Gastrocnemius medialis (tissue), 4 donors: ENCODE measurements at regions of chr5 and their contacts with region 1.

Region 1: GRCh38 chr5:36739751-36740221 is 133.4 kb downstream of the SLC1A3 start:
- DNase-seq: peak in 1 of 2 donors; percentile 45
- ATAC-seq: peak in 1 of 2 donors; percentile 63
- H3K4me3 ChIP-seq: no peak overlapping the region
- H3K27ac ChIP-seq: no peak overlapping the region
- H3K4me1 ChIP-seq: peaks cover 8% of the 10 kb centered on the region in 2 donors
- H3K27me3 ChIP-seq: peaks cover 0 to 7% (median 0%) of the 10 kb centered on the region in 3 donors
- CTCF ChIP-seq: peak; percentile 40 to 66 (median 60)
- POLR2A ChIP-seq: no peak

Region 2: GRCh38 chr5:35847961-35848360 is 891.8 kb before region 1 on chr5:
- in situ Hi-C with region 1: no loop called
- intact Hi-C with region 1: no loop called
- DNase-seq: no peak
- ATAC-seq: no peak
- H3K4me3 ChIP-seq: no peak overlapping the region
- H3K27ac ChIP-seq: no peak overlapping the region
- H3K4me1 ChIP-seq: peaks cover 0 to 10% of the 10 kb centered on the region in 2 donors
- H3K27me3 ChIP-seq: peaks cover 0 to 3% (median 0%) of the 10 kb centered on the region in 3 donors
- CTCF ChIP-seq: no peak
- POLR2A ChIP-seq: no peak

Region 3: DNA sequence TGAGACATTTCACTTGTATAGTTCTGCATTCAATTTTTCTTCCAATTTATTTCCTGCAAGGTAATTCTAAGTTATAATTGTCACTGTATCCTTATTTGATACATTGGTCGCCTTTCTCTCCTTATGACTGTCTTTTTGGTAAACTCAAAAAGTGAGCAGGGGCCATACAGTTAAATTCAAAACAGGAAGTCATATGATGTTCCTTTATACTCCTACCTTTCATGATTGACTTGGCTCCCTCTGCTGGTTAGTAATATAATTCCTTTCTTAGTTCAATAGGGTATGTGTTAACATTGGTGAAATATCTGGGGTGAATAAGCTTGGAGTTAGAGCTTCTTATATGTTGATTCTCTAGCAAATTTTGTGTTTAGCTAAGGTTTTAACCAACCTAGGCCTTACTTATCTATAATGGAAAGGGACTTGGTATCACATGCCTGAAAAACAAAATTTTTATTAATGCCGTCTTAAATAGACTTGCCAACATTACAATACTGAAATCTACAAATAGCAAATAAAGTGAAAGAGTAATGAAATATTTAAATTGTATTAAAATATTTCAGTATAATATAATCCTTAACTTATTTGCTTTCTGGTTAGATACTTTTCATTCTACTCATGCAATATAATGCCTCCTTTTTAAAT is 130.7 kb after region 1 on chr5:
- in situ Hi-C with region 1: loop called (anchors 5 to 25 kb)
- intact Hi-C with region 1: loop called (anchors 2 kb)
- DNase-seq: no peak
- ATAC-seq: peak; percentile 77 to 81
- H3K4me3 ChIP-seq: no peak overlapping the region
- H3K27ac ChIP-seq: no peak overlapping the region
- H3K4me1 ChIP-seq: peaks cover 20 to 30% of the 10 kb centered on the region in 2 donors
- H3K27me3 ChIP-seq: no peaks in the 10 kb centered on the region
- CTCF ChIP-seq: peak; percentile 36 to 68 (median 58)
- POLR2A ChIP-seq: no peak

Region 4: DNA sequence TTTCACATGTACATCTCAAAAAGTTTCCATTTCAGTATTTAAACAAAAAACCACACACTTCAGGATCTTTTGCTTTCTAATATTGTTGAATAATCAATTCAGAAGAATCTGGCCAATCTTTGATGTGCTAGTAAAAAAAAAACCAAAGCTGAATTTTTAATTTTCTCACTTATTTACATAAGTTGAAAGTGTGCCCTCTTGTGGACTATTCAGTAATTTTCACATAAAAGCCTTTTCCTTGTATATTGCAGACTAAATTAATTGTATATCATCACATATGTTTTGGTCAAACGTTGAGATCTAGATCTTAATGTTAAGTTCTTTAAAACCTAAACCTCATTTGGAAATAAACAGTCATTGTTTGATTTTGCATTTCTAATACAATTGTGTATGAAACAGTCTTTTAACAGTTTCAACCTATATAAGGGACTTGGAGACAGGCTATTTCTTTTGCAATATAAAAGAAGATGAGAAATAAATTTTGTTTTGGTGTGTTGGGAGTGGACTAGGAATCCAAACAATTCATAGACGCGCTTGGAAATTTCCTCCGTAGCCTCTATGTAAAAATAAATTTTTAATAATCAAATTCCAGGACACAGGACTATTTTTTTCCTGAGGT is 204.9 kb after region 1 on chr5:
- in situ Hi-C with region 1: loop called in 1 of 4 experiments (anchors 10 kb)
- intact Hi-C with region 1: no loop called
- DNase-seq: no peak
- ATAC-seq: no peak
- H3K4me3 ChIP-seq: no peak overlapping the region
- H3K27ac ChIP-seq: no peak overlapping the region
- H3K4me1 ChIP-seq: peaks cover 40 to 44% of the 10 kb centered on the region in 2 donors
- H3K27me3 ChIP-seq: no peaks in the 10 kb centered on the region
- CTCF ChIP-seq: peak in 4 of 5 experiments; percentile 20 to 68 (median 38)
- POLR2A ChIP-seq: no peak

Region 5: DNA sequence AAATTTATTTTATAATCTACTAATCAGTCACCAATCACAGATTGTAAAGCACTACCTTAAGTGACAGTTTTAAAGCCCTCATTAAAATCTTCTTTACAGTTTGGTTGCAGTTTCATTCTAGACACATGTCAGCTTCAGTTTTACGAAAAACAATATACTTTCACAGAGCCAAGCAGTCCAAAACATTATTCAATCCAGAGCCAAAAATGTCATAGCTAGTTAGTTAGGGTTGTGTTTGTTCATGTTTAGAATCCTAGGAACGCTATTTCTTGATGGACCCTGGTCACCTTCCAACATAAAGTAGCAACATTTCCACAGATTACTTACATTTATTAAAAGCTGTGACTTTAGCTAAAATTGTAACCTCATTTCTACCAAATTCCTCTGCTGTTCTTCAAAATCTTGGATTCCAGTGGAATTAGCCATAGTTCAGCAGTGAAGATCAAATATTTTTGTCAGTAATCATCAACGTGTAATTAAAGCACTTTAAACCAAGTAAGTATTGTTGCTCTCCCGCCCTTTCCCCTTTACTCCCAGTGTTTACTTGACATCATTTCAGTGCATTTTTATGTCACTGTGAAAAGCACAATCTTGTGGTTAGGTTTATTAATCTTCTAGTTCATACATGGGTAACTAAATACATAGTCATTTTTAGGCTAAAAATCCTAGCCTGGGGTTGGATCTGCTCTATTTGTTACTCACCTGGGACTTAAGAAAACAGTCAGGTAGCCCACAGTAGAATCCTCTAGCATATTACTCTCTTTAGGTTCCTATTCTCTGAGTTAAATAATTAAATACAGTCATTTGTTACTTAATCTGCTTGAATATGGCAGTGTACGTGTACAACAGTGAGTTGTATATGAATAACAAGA is 211.0 kb after region 1 on chr5:
- in situ Hi-C with region 1: loop called in 1 of 4 experiments (anchors 10 kb)
- intact Hi-C with region 1: loop called (anchors 5 kb)
- DNase-seq: no peak
- ATAC-seq: no peak
- H3K4me3 ChIP-seq: no peak overlapping the region
- H3K27ac ChIP-seq: no peak overlapping the region
- H3K4me1 ChIP-seq: peaks cover 45 to 47% of the 10 kb centered on the region in 2 donors
- H3K27me3 ChIP-seq: no peaks in the 10 kb centered on the region
- CTCF ChIP-seq: no peak
- POLR2A ChIP-seq: no peak

Region 6: DNA sequence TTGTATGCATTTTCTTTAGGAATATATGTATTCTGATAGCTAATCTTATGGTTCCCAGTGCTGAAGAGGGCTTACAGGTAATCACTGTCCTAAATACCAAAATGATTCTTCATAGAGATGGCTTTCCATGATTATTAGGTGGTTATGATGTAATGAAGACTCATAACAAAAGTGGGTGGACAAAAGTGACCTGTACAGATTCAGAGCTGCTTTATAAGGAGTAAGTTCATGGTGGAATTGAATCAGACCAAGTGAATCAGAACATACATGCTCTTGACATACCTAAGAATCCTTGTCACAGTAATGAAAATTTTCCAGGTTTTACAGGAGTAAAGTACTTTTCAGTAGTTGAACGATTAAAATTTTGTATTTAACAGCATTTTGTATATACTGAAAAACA is 242.4 kb after region 1 on chr5:
- in situ Hi-C with region 1: loop called in 1 of 4 experiments (anchors 25 kb)
- intact Hi-C with region 1: no loop called
- DNase-seq: no peak
- ATAC-seq: no peak
- H3K4me3 ChIP-seq: no peak overlapping the region
- H3K27ac ChIP-seq: no peak overlapping the region
- H3K4me1 ChIP-seq: no peaks in the 10 kb centered on the region
- H3K27me3 ChIP-seq: no peaks in the 10 kb centered on the region
- CTCF ChIP-seq: no peak
- POLR2A ChIP-seq: no peak

Region 7: DNA sequence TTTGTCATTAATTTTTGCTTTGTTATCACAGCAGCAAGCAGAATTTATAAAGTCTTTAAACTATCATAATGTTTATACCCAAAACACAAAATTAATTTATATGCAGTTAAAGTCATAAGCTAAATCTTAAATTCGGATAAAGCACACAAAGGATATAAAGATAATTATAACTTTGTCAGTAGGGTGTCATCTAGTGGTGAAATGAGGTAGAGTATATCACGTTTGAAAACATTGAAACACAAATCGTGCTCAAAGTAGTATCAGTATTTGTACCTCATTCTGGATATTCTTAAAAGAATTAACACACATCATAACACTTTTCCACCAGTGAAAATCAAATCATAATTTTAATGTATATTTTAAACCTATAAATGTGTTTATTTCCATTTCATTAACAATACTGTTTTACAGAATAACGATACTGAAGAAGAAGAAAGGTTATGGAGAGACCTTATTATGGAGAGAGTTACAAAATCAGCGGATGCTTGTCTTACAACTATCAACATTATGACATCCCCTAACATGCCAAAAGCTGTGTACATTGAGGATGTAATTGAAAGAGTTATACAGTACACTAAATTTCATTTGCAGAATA is 266.3 kb after region 1 on chr5:
- in situ Hi-C with region 1: loop called in 3 of 4 experiments (anchors 25 kb)
- intact Hi-C with region 1: loop called (anchors 10 kb)
- DNase-seq: no peak
- ATAC-seq: no peak
- H3K4me3 ChIP-seq: no peak overlapping the region
- H3K27ac ChIP-seq: no peak overlapping the region
- H3K4me1 ChIP-seq: no peaks in the 10 kb centered on the region
- H3K27me3 ChIP-seq: no peaks in the 10 kb centered on the region
- CTCF ChIP-seq: peak; percentile 13 to 59 (median 48)
- POLR2A ChIP-seq: no peak

Region 8: DNA sequence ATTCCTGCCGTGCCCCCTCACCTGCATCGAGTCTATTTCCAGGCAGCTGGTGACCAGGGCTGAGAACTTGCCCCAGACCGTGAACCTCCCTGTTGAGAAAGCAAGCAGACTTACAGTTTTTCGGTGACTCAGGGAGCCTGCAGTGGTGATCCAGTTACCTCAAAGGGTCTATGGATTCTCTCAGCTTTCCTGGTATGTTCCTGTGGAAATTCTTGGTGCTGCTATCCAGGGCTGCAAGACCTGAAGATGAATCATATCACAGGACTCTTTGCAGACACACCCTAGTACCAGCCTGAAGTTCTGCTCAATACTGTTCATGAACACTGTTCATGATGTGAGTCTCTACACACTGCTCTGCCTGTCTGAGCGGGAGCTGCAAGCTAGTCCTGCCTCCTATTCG is 794.1 kb after region 1 on chr5:
- in situ Hi-C with region 1: no loop called
- intact Hi-C with region 1: no loop called
- DNase-seq: no peak
- ATAC-seq: peak in 1 of 2 donors; percentile 36
- H3K4me3 ChIP-seq: no peak overlapping the region
- H3K27ac ChIP-seq: no peak overlapping the region
- H3K4me1 ChIP-seq: no peaks in the 10 kb centered on the region
- H3K27me3 ChIP-seq: no peaks in the 10 kb centered on the region
- CTCF ChIP-seq: no peak
- POLR2A ChIP-seq: no peak